Activated CD4-positive, alpha-beta memory T cell treated with anti-CD3 and anti-CD28 coated beads, Interleukin-2, amount 10 ng/mL, durations not matched to agents 7 days and 5 days (primary cell): ENCODE measurements at regions of chr7 and their contacts with region 1.

Region 1: DNA sequence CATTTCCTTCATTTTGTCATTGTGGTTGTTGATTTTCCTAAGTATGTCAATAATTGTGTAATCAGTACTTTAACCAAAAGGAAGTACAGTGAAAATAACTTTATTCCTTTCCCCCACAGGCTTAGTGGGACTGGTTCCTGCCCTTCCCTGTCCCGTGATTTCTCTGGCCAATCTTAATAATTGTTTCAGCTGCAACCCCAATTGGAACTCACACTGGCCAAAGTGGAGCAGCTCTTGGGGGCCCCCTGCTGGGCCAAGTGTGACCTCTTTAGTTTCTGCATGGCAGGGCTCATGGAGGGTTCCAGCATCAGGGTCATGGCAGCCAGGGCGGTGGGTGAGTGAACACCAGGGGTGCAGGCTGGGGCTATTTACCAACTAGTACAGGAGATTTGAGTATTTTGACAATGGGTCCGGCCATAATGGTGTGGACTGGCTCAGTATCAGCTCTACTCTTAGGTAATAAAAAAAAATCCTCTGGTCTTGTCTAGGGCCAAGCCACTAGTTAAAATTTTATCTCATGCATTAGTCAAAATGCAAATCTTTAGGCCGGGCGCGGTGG is 31.7 kb downstream of the CYCS start:
- DNase-seq: peak; percentile 83
- H3K4me3 Mint-ChIP-seq: no peak overlapping the region
- H3K27ac Mint-ChIP-seq: no peak overlapping the region
- H3K4me1 Mint-ChIP-seq: peaks cover 12% of the 10 kb centered on the region
- H3K27me3 Mint-ChIP-seq: peaks cover 12% of the 10 kb centered on the region

Region 2: DNA sequence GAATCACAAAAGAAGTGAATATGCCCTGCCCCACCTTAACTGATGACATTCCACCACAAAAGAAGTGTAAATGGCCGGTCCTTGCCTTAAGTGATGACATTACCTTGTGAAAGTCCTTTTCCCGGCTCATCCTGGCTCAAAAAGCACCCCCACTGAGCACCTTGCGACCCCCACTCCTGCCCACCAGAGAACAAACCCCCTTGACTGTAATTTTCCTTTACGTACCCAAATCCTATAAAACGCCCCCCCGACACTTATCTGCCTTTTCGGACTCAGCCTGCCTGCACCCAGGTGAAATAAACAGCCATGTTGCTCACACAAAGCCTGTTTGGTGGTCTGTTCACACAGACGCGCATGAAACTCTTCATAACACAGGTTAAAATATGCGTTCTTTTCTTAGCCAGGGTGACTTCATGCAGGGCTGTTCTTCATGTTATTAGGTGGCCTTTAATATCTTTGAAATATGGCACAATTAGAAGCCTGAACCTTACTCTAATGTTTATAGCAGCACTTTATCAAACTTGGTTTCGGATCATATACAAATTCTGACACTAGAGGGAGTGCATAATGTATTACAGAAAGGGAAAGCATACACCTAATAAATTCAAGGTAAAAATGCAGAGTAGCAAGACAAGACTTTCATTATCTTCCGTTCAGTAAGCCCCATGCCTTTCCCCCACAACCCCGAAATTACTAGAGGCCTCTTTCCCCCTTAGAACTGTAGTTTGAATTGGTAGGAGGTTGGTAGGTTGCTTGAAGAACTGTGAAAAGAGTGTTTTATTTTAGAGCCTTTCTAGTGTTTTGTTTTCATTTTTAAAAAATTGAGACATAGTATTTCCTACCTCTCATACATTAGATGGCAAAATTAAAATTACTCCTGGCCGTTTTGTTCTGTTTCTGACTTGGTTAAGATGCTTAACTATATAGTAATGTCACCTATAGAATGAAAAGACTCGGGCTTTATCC is 691.4 kb before region 1 on chr7:
- CTCF ChIA-PET with region 1: no interaction called
- POLR2A ChIA-PET with region 1: no interaction called
- DNase-seq: no peak
- H3K4me3 Mint-ChIP-seq: no peak overlapping the region
- H3K27ac Mint-ChIP-seq: no peak overlapping the region
- H3K4me1 Mint-ChIP-seq: no peaks in the 10 kb centered on the region
- H3K27me3 Mint-ChIP-seq: peaks cover 2% of the 10 kb centered on the region

Region 3: DNA sequence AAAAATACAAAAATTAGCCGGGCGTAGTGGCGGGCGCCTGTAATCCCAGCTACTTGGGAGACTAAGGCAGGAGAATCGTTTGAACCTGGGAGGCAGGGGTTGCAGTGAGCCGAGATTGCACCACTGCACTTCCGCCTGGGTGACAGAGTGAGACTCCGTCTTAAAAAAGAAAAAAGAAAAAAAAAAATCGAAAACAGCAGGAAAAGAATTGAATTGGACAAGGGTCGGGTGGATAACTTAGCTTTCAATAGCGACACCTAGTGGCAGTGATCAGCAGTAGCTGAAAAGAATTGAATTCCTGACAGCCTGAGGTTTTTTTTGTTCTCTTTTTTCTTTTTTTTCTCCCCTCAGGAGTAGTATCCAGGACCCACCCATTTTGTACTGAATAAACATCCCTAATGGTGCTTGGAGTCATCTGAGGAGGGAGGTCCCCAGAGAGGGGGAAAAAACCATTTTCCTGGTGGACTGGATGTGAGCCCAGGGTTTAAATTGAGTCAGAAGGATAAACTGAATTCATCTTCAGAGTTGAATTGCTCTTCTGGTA is 23.4 kb before region 1 on chr7:
- CTCF ChIA-PET with region 1: interaction called, 35 read pairs
- POLR2A ChIA-PET with region 1: no interaction called
- DNase-seq: peak; percentile 47
- H3K4me3 Mint-ChIP-seq: no peak overlapping the region
- H3K27ac Mint-ChIP-seq: no peak overlapping the region
- H3K4me1 Mint-ChIP-seq: peaks cover 16% of the 10 kb centered on the region
- H3K27me3 Mint-ChIP-seq: no peaks in the 10 kb centered on the region

Region 4: DNA sequence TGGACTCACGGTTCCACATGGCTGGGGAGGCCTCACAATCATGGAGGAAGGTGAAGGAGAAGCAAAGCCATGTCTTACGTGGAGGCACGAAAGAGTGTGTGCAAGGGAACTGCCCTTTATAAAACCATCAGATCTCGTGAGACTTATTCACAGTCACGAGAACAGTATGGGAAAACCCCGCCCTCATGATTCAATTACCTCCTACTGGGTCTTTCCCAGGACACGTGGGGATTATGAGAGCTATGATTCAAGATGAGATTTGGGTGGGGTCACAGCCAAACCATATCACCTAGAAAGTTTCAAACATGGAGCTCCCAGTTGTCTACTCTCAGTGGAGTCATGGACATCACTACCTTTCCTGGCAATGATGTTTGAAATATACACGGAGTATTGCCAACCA is 17.9 kb before region 1 on chr7:
- CTCF ChIA-PET with region 1: interaction called, 35 read pairs
- POLR2A ChIA-PET with region 1: no interaction called
- DNase-seq: no peak
- H3K4me3 Mint-ChIP-seq: no peak overlapping the region
- H3K27ac Mint-ChIP-seq: no peak overlapping the region
- H3K4me1 Mint-ChIP-seq: peaks cover 9% of the 10 kb centered on the region
- H3K27me3 Mint-ChIP-seq: peaks cover 9% of the 10 kb centered on the region

Region 5: GRCh38 chr7:25206765-25207164 is 113.4 kb after region 1 on chr7:
- CTCF ChIA-PET with region 1: no interaction called
- POLR2A ChIA-PET with region 1: no interaction called
- DNase-seq: no peak
- H3K4me3 Mint-ChIP-seq: no peak overlapping the region
- H3K27ac Mint-ChIP-seq: no peak overlapping the region
- H3K4me1 Mint-ChIP-seq: peaks cover 1% of the 10 kb centered on the region
- H3K27me3 Mint-ChIP-seq: peaks cover 40% of the 10 kb centered on the region